A673 (cell line): ENCODE measurements at regions of chr4 and their contacts with region 1.

Region 1: GRCh38 chr4:47032415-47033106 is 1.2 kb downstream of the GABRB1 start:
- DNase-seq: peak; percentile 87
- H3K4me3 ChIP-seq: peak overlapping the region; percentile 53
- H3K27ac ChIP-seq: no peak overlapping the region
- H3K4me1 ChIP-seq: no peaks in the 10 kb centered on the region
- H3K27me3 ChIP-seq: no peaks in the 10 kb centered on the region
- CTCF ChIP-seq: peak; percentile 95

Region 2: DNA sequence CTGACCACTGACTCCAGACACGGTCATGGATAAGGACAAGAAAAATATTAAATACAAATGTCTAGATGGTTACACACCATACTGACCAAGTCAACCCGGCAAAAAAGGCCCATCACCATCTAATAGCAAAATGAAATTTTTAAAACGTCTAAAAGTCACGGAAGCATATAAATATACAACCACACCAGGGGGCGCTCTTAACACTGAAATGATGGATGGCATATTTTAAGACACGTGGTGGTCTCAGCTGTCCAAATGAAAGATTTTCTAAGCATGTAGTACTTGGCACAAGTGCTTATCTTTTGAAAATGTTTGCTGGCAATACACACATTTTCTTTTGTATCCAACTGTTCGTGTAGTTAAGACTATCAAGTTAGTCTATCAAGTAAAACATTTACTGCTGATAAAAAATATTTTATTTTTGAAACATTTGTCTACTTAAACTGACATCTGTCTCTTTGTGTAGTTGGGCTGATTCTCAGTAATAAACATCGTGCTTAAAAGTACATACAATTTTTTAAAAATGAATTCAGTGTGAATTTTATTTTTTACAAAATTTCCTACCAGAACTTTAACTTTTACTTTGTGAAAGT is 188.1 kb before region 1 on chr4:
- CTCF ChIA-PET with region 1: no interaction called
- POLR2A ChIA-PET with region 1: no interaction called
- intact Hi-C with region 1: loop called (anchors 1 kb)
- DNase-seq: peak; percentile 79
- H3K4me3 ChIP-seq: no peak overlapping the region
- H3K27ac ChIP-seq: no peak overlapping the region
- H3K4me1 ChIP-seq: no peaks in the 10 kb centered on the region
- H3K27me3 ChIP-seq: no peaks in the 10 kb centered on the region
- CTCF ChIP-seq: peak; percentile 81

Region 3: DNA sequence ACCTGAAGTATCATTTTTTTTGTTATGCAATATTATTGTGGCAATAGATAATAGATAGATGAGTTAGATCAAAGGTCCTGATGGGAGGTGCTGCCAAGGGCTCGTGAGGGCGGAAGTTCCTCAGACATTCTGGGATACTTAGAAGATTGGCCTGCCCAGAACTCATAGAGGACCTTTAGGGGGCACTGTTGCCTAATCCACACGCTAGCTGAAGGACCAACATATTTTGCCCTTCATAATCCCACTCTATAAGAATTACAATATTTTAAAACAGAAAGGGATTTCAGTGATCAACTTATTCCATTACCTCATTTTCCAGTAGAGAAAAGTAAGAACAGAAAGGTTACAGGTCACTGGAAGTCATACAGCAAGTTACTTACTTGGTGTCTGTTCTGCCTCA is 100.6 kb before region 1 on chr4:
- CTCF ChIA-PET with region 1: interaction called, 7 read pairs
- POLR2A ChIA-PET with region 1: no interaction called
- intact Hi-C with region 1: loop called (anchors 2 kb)
- DNase-seq: peak; percentile 67
- H3K4me3 ChIP-seq: no peak overlapping the region
- H3K27ac ChIP-seq: no peak overlapping the region
- H3K4me1 ChIP-seq: no peaks in the 10 kb centered on the region
- H3K27me3 ChIP-seq: peaks cover 28% of the 10 kb centered on the region
- CTCF ChIP-seq: peak; percentile 79